PC-3 (cell line): ENCODE measurements at regions of chr22 and their contacts with region 1.

Region 1: DNA sequence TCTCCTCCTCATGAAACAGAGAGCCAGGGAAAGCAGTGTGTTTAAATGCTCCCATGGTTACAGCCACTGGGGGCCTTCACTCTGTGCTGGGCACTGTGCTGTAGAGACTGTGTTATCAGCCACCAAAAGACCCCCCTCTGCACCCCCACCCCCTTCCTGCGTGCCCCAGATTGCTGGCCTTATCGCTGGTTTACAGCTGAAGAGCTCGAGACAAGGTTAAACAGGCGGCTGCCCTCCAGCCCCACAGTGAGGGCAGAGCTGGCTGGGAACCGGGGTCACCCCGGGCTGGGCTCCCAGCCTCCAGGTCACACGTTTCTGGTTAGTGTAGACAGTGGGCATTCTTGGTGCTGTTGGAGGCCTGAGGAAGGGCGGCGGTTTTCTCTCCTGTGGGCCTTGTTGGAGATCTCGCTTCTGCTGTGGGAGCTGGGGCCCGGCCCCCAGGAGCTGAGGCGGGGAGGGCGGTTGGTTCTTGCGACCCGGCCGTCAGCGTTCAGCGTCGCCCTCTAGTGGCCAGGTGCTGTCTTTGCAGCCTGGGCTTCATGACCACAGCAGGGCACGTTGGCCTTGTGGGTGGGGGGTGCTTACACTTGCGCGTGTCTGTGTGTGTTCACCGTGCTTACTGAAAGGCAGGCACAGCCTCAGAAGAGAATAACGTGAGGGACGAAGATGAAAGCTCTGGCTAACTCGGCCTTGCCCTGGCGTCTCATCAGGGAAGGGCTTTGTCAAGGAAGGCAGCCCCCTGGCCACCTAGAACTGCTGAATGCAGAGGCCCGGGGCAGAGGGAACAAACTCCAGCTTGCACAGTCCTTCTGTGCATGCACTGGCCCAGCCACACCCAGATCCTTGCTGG is 40.8 kb downstream of the TBC1D22A start:
- DNase-seq: peak; percentile 60
- ATAC-seq: peak; percentile 62
- H3K4me3 ChIP-seq: no peak overlapping the region
- H3K27ac ChIP-seq: no peak overlapping the region
- H3K4me1 ChIP-seq: no peaks in the 10 kb centered on the region
- H3K27me3 ChIP-seq: no peaks in the 10 kb centered on the region
- CTCF ChIP-seq: peak; percentile 86

Region 2: GRCh38 chr22:46829941-46830715 is 26.9 kb after region 1 on chr22:
- CTCF ChIA-PET with region 1: interaction called, 3 read pairs
- POLR2A ChIA-PET with region 1: interaction called, 5 read pairs
- intact Hi-C with region 1: loop called (anchors 2 kb)
- DNase-seq: peak; percentile 84
- ATAC-seq: peak; percentile 72
- H3K4me3 ChIP-seq: peak overlapping the region; percentile 57
- H3K27ac ChIP-seq: peak overlapping the region; percentile 99
- H3K4me1 ChIP-seq: peaks cover 43% of the 10 kb centered on the region
- H3K27me3 ChIP-seq: no peaks in the 10 kb centered on the region
- CTCF ChIP-seq: no peak

Region 3: DNA sequence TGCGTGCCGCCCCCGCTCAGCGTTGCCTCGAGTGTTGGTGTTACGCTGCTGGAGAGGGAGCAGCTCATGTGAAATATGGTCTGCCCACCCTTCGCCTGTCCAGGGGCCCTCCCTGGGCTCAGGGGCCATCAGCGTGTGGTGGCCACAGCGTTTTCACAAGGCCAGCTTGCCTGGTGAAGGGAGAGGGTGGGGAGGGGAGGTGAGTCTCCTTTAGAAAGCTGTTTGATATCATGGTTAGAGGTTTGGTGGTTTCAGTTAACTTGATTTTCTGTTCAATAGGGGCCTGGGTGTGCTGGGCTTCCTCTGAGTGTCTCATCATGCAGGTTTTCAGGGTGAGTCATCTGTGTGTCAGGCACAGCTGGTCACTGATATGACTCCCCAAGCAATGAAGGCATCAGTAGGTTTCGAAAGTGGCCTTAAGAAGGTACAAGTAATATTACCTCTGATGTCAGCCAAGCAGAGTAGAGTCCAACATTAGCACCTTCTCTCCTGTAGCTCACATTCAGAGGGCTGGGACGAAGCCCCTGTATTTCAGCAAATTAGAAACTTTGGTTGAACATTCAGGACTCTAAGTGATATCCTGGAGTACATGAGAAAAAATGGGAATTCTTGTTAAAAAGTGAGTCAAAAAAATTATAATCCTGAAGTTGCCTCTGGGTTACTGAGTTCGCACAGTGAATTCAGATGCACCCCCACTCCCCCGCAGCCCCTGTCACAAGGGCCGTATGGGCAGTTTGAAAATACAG is 131.7 kb after region 1 on chr22:
- CTCF ChIA-PET with region 1: no interaction called
- POLR2A ChIA-PET with region 1: no interaction called
- intact Hi-C with region 1: no loop called
- DNase-seq: peak; percentile 85
- ATAC-seq: peak; percentile 96
- H3K4me3 ChIP-seq: no peak overlapping the region
- H3K27ac ChIP-seq: peak overlapping the region; percentile 63
- H3K4me1 ChIP-seq: peaks cover 15% of the 10 kb centered on the region
- H3K27me3 ChIP-seq: no peaks in the 10 kb centered on the region
- CTCF ChIP-seq: no peak